PC-9 (cell line): ENCODE measurements at regions of chr12 and their contacts with region 1.

Region 1: DNA sequence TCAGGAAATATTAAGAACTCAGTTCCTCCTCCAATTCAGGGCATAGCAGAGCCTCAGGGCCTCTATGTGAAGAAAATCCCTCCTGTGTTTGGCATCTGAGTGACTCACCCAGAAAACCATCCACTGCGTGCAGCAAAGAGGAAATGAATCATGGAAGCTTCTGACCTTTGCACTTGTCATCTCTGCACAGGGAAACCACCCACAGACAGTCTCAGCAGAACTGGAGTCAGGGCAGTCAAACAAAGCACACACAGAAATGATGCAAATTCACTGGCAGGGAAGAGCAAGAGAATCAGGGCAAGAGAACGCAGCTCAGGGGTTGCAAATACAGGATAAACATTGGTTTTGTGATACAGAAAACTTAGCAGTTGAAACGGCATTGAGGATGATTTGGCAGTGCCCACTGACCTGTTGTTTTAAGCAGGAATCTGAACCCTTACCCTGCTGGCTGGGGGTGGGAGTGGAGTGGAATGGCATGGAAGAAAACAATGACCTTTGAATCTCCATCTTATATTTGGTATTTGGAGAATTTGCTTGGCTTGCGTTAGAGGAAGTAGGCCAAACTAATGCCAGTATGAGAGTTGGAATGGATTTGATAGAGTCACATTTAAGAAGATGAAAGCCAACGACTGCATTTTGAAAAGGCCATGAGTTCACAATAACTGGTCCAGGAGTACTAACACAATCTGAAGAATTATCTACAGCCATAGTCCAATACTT is 53.5 kb downstream of the PHLDA1 start:
- DNase-seq: peak; percentile 86 to 100
- H3K4me3 ChIP-seq: peak overlapping the region; percentile 28; the same call in 1 of the 2 replicates
- H3K27ac ChIP-seq: peak overlapping the region; percentile 99
- H3K4me1 ChIP-seq: peaks cover 64% of the 10 kb centered on the region
- H3K27me3 ChIP-seq: no peaks in the 10 kb centered on the region
- CTCF ChIP-seq: no peak

Region 2: GRCh38 chr12:75623631-75624118 is 354.4 kb before region 1 on chr12:
- CTCF ChIA-PET with region 1: no interaction called
- POLR2A ChIA-PET with region 1: no interaction called
- intact Hi-C with region 1: loop called (anchors 1 kb)
- DNase-seq: peak; percentile 33 to 69
- H3K4me3 ChIP-seq: no peak overlapping the region
- H3K27ac ChIP-seq: peak overlapping the region; percentile 62
- H3K4me1 ChIP-seq: peaks cover 16% of the 10 kb centered on the region
- H3K27me3 ChIP-seq: no peaks in the 10 kb centered on the region
- CTCF ChIP-seq: peak; percentile 54; the same call in 1 of the 2 replicates

Region 3: DNA sequence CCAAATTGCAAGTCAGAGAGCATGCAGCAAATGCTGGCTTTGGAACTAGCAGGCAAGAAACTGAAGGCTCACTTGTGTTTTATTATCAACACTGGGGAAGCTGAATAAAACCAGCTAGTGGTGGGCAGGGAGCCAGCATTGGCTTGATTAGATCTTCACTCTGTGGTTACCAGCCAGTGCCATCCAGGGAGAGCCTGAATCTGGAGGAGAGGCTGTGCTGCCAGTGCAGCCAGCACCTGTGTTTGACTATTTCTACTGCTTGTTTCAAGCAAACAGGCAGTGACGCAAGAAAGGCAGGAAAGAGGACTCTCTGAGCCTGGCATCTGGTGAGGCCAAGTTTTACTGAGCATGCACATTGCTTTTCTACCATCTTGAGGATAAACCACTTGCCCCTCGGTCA is 193.5 kb before region 1 on chr12:
- CTCF ChIA-PET with region 1: no interaction called
- POLR2A ChIA-PET with region 1: no interaction called
- intact Hi-C with region 1: loop called (anchors 5 kb)
- DNase-seq: peak; percentile 83 to 84
- H3K4me3 ChIP-seq: no peak overlapping the region
- H3K27ac ChIP-seq: peak overlapping the region; percentile 21; the same call in 1 of the 2 replicates
- H3K4me1 ChIP-seq: peaks cover 40% of the 10 kb centered on the region
- H3K27me3 ChIP-seq: no peaks in the 10 kb centered on the region
- CTCF ChIP-seq: no peak

Region 4: DNA sequence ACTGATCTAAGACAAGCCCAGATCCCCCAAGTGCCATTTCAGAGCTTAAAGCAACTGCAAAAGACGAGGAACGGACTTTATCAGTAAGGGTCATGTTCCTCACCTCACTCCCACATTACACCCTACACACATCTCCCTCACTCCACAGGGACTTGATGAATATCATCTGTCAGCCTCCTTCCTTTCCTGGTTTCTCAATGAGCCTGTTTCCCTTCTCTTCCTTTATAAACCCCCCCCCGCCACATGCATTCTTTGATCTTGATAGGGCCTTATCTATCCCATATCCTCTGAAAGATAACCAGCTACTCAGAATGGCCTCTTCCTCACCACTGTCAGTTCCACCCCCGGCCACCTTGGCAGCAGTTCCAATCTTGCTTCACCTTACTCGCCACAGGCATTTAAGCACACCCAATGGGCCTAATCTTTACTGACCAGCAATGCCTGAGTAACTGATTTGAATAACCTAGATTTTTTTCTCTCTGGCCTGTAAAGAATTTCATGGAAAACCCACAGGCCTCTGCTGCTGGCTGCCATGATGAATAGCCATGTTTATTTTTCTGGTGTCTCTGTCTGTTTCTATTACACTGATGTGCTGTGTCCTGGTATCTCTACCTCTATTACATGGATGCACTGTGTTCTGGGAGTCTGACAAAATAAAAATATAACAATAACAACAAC is 85.2 kb before region 1 on chr12:
- CTCF ChIA-PET with region 1: no interaction called
- POLR2A ChIA-PET with region 1: no interaction called
- intact Hi-C with region 1: loop called (anchors 2 kb)
- DNase-seq: peak; percentile 51 to 64
- H3K4me3 ChIP-seq: no peak overlapping the region
- H3K27ac ChIP-seq: no peak overlapping the region
- H3K4me1 ChIP-seq: peaks cover 39% of the 10 kb centered on the region
- H3K27me3 ChIP-seq: no peaks in the 10 kb centered on the region
- CTCF ChIP-seq: no peak

Region 5: DNA sequence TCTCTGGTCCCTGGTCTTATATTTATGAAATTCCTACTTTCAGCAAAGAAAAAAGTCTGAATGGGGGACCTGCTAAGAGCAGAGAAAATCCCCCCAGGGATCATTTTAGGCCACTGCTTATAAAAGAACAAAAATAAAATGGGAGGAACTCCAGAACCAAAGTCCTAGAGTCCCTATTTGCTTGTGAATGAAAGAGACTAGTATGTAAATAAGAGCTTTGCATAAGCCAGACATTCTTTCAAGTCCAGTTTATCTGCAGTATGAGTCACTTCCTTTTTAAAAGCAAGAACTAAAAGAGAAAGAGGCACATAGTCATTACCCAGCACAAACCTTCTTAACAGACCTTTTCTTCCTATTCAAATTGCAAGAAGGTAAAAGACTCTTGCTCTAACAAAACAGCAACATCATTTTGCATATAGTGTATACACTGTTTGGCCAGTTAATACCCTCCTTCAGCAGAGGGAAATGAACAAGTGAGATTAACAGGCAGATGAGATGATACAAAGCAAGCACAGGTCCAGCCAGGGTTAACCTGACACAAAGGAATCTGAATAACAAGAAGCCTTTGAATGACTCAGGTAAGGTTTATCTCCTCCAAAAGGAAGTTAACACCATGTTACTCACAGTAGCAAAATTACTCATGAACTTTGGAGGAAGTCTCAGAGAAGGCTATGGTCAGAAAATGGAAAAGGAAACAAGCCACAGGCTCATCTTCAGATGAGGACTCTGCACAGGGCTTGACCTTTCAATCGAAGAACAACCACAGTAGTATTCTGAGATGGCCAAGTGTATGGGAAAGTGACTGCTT is 33.8 kb before region 1 on chr12:
- CTCF ChIA-PET with region 1: interaction called, 7 read pairs
- POLR2A ChIA-PET with region 1: no interaction called
- intact Hi-C with region 1: loop called (anchors 1 kb)
- DNase-seq: peak; percentile 43 to 97
- H3K4me3 ChIP-seq: peak overlapping the region; percentile 22; the same call in 1 of the 2 replicates
- H3K27ac ChIP-seq: peak overlapping the region; percentile 99
- H3K4me1 ChIP-seq: peaks cover 53% of the 10 kb centered on the region
- H3K27me3 ChIP-seq: no peaks in the 10 kb centered on the region
- CTCF ChIP-seq: no peak

Region 6: GRCh38 chr12:75994186-75994731 is 16.1 kb after region 1 on chr12:
- CTCF ChIA-PET with region 1: no interaction called
- POLR2A ChIA-PET with region 1: no interaction called
- intact Hi-C with region 1: loop called (anchors 1 kb)
- DNase-seq: peak; percentile 31 to 87
- H3K4me3 ChIP-seq: no peak overlapping the region
- H3K27ac ChIP-seq: peak overlapping the region; percentile 81
- H3K4me1 ChIP-seq: peaks cover 63% of the 10 kb centered on the region
- H3K27me3 ChIP-seq: no peaks in the 10 kb centered on the region
- CTCF ChIP-seq: no peak

Region 7: DNA sequence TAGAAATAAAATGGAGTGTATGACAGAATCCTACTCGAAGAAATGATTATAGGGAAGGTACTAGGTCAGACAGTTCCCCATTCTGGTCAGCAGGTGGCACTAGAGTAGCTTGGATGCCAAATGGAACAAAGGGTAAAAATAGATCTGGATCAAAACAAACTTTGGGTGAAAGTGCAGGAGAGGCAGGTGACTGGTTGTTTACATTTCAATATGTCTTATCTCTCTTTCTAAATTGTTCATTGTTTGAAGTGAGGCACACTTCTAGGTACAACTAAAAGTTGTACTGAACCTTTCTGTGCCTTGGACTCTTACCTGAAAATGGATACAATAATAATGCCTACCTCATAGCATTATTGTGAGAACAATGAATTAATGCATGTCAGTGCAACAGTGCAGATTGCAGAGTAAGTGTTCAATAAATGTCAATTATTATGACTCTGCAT is 643.5 kb after region 1 on chr12:
- CTCF ChIA-PET with region 1: interaction called, 11 read pairs
- POLR2A ChIA-PET with region 1: no interaction called
- intact Hi-C with region 1: no loop called
- DNase-seq: peak; percentile 51 to 60
- H3K4me3 ChIP-seq: no peak overlapping the region
- H3K27ac ChIP-seq: no peak overlapping the region
- H3K4me1 ChIP-seq: peaks cover 6% of the 10 kb centered on the region; the same call in 1 of the 2 replicates
- H3K27me3 ChIP-seq: no peaks in the 10 kb centered on the region
- CTCF ChIP-seq: peak; percentile 93